Activated naive CD4-positive, alpha-beta T cell treated with anti-CD3 and anti-CD28 coated beads for 36 hours (primary cell): ENCODE measurements at regions of chr10 and their contacts with region 1.

Region 1: GRCh38 chr10:59181668-59182067 is 5.2 kb downstream of the PHYHIPL start:
- DNase-seq: no peak
- H3K4me3 Mint-ChIP-seq: no peak overlapping the region
- H3K27ac Mint-ChIP-seq: no peak overlapping the region
- H3K4me1 Mint-ChIP-seq: peaks cover 5% of the 10 kb centered on the region
- H3K27me3 Mint-ChIP-seq: peaks cover 12% of the 10 kb centered on the region

Region 2: DNA sequence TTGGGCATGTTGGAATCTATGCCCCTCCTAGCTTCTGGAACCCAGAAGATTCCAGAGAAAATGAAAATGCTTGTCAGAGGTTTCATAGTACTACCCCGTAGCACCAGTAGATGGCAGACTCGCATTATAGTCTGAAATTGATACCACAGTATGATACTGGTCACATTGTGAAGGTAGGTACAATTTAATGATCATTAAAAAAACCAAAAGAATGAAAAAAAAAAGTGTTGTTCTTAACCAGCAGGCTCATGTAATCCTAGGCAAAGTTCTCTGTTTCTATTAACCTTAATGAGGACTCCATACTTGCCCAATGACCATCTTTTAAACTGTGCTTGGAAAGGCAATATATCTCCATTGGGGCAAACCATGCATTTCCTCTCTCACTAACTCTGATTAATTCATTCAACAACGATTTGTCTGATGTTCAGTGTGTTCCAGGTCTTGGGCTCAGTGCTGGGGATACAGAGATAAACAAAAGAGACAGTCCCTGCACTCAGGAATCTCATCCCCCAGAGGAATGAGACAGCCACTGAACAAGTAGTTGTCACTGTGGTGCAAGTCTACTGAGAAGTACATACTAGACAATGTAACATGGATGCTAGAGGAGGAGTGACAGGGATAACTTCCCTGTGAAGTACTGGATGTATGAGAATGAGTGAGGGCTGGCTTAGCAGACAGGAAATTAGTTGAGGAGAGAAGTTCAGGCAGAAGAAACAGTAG is 228.8 kb before region 1 on chr10:
- CTCF ChIA-PET with region 1: no interaction called
- intact Hi-C with region 1: loop called (anchors 2 kb)
- DNase-seq: peak; percentile 32
- H3K4me3 Mint-ChIP-seq: no peak overlapping the region
- H3K27ac Mint-ChIP-seq: no peak overlapping the region
- H3K4me1 Mint-ChIP-seq: no peaks in the 10 kb centered on the region
- H3K27me3 Mint-ChIP-seq: no peaks in the 10 kb centered on the region

Region 3: GRCh38 chr10:59240582-59241183 is 59.0 kb after region 1 on chr10:
- CTCF ChIA-PET with region 1: no interaction called
- intact Hi-C with region 1: no loop called
- DNase-seq: no peak
- H3K4me3 Mint-ChIP-seq: no peak overlapping the region
- H3K27ac Mint-ChIP-seq: no peak overlapping the region
- H3K4me1 Mint-ChIP-seq: no peaks in the 10 kb centered on the region
- H3K27me3 Mint-ChIP-seq: no peaks in the 10 kb centered on the region

Region 4: DNA sequence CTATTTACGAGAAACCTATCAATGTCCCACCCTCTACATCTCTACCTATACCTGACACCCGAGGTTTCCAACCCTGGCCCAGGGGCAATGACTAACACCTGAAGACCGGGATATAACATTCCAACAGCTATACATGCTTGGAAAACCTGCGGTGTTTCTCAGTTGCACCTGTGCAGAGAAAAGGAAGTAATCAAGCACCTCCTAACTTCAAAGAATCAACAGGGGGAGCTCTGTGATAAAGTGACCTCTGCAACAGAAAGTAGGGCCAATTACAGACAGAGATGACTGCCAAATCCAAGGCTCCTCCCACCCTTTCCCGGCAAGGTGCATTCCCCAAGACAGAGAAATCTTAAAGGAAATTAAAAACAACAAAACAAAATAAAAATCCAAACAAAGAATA is 683.4 kb after region 1 on chr10:
- CTCF ChIA-PET with region 1: no interaction called
- intact Hi-C with region 1: no loop called
- DNase-seq: peak; percentile 33
- H3K4me3 Mint-ChIP-seq: no peak overlapping the region
- H3K27ac Mint-ChIP-seq: peak overlapping the region; percentile 14
- H3K4me1 Mint-ChIP-seq: peaks cover 70% of the 10 kb centered on the region
- H3K27me3 Mint-ChIP-seq: no peaks in the 10 kb centered on the region